ENCODE measurements at regions of chr5 and their contacts with region 1.

Region 1: GRCh38 chr5:109439590-109439989 is 29.8 kb upstream of the PJA2 start:
- DNase-seq: no peak
- H3K4me3 ChIP-seq: no peak overlapping the region
- H3K27ac ChIP-seq: no peak overlapping the region
- H3K4me1 ChIP-seq: no peaks in the 10 kb centered on the region
- H3K27me3 ChIP-seq: no peaks in the 10 kb centered on the region
- CTCF ChIP-seq: no peak
- POLR2A ChIP-seq: no peak

Region 2: DNA sequence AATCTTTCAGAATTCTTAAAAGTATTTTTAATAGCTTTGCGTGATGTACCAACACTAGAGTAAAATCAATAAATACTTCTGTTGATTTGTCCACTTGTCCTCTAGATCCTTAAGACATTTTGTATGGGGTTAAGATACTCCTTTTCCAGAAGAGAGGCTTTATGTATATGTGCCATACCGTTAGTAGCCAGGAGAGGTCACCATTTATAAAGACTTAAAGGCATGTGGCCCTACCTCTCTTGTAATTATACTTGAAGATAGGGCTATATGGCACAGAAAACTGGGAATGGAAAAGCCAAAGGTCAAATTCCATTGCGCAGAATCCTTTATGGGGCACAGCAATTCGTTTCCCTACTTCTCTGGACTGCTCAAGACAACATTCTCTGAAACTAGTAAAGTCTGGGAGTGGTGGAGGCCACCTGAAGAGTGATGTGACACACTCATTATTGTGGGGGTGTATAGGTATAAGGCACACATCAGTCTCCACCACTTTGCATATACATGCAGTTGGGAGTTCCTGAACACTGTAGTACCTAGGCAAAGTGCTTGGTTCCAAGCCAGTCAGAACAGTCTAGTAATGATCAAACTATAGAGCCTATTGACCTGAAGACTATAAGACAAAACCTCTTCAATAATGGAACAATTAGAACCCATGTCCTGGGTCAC is 917.6 kb before region 1 on chr5:
- intact Hi-C with region 1: loop called (anchors 10 kb)
- DNase-seq: no peak
- H3K4me3 ChIP-seq: no peak overlapping the region
- H3K27ac ChIP-seq: no peak overlapping the region
- H3K4me1 ChIP-seq: no peaks in the 10 kb centered on the region
- H3K27me3 ChIP-seq: no peaks in the 10 kb centered on the region
- CTCF ChIP-seq: peak in 3 of 4 experiments; percentile 39 to 50 (median 45)
- POLR2A ChIP-seq: no peak

Region 3: DNA sequence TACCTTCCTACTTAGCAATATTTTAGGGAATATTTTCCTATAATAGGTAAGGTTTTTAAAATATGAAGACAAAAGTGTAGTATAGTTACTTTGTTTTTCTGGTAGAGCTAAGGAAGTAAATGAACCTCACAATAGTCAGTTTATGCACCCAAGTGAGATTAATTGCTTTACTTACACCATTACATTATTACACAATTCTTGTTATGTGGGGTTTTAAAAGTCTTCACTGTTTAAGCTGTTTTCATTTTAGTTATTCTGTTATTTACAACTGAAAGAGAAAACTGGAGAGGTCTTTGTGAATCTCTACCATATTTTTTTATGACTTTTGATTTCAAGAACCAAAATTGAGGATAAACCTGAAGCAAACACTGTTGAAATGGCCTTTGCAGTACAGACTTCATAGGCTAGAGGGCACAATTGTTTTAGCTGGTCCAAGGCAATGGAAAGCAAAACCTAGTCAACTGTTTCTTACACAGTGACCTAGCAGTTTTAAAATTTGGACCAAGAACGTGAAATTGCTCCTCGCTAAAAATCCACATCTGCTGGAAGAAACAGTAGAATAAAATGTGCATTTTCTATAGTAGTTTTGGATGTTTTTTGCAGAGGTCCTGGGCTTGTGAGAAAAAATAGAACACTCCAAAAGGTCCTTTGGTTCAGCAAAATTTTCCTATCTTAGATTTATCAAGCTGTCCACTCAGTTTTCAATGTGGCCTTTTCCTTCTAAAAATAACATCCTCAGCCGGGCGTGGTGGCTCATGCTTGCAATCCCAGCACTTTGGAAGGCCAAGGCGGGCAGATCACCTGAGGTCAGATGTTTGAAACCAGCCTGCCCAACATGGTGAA is 758.3 kb before region 1 on chr5:
- intact Hi-C with region 1: loop called (anchors 2 kb)
- DNase-seq: peak; percentile 10
- H3K4me3 ChIP-seq: no peak overlapping the region
- H3K27ac ChIP-seq: no peak overlapping the region
- H3K4me1 ChIP-seq: no peaks in the 10 kb centered on the region
- H3K27me3 ChIP-seq: no peaks in the 10 kb centered on the region
- CTCF ChIP-seq: peak; percentile 22 to 74 (median 58)
- POLR2A ChIP-seq: no peak